ENCODE measurements at regions of chr16 and their contacts with region 1.

Region 1: DNA sequence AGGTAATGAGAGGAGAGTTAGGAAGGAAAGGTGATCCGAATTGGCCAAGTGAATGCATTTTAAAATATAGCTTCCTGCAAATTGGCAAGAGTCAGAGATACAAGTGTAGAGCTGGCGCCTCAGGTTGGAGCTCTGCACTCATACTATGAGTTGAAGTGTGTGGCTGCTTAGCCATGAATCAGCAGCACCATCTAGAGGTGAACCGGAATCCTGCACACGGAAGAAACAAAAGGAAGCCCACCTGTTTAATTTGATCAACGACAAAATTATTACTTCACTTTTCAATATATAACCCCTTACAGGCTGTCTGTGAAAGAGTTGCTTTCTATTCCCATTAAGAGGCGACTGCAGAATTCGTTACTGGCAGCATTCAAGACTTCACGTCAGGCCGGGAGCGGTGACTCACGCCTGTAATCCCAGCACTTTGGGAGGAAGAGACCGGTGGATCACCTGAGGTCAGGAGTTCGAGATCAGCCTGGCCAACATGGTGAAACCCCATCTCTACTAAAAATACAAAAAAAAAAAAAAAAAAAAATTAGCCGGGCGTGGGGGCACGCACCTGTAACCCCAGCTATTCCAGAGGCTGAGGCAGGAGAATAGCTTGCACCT is 1253.7 kb upstream of the CDH8 start:
- DNase-seq: peak in 9 of 10 donors; percentile 9 to 73 (median 57)
- H3K4me3 ChIP-seq: peak overlapping the region in 10 of 59 donors; percentile 14 to 44 (median 30)
- H3K27ac ChIP-seq: peak overlapping the region in 2 of 59 donors; percentile 2 to 31
- H3K27me3 ChIP-seq: no peaks in the 10 kb centered on the region
- CTCF ChIP-seq: peak; percentile 68 to 96 (median 88)

Region 2: DNA sequence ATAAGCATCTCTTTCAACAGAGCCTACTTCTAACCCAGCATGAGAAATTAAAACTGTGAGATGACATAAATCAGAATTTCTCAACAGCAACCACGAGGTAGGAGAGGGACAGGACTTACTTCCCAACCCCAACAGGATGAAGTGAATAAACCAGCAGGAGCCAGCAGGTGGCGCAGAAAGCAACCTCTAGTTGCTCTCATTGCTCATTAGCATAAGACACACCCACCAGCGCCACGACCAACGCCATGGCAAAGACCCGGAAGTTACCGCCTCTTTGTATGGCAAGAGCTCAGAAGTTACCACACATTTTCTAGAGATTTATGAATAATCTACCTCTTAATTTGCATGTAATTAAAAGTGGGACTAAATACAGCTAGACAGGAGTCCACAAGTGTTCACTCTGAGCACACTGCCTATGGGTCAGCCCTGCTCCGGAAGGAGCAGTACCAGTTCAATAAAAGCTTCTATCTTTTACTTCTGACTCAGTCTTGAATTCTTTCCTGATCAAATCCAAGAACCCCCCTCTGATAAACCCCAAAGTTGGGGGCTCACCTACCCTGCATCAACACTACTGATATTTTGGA is 1064.2 kb before region 1 on chr16:
- intact Hi-C with region 1: loop called in 1 of 2 experiments (anchors 10 kb)
- DNase-seq: peak in 9 of 10 donors; percentile 55 to 86 (median 68)
- H3K4me3 ChIP-seq: peak overlapping the region in 27 of 59 donors; percentile 3 to 52 (median 29)
- H3K27ac ChIP-seq: no peak overlapping the region
- H3K27me3 ChIP-seq: peaks cover 0 to 5% (median 0%) of the 10 kb centered on the region in 45 donors
- CTCF ChIP-seq: peak in 54 of 56 donors; percentile 12 to 77 (median 56)

Measured in dorsolateral prefrontal cortex (tissue), 120 donors.